ENCODE measurements at regions of chr20 and their contacts with region 1.

Region 1: DNA sequence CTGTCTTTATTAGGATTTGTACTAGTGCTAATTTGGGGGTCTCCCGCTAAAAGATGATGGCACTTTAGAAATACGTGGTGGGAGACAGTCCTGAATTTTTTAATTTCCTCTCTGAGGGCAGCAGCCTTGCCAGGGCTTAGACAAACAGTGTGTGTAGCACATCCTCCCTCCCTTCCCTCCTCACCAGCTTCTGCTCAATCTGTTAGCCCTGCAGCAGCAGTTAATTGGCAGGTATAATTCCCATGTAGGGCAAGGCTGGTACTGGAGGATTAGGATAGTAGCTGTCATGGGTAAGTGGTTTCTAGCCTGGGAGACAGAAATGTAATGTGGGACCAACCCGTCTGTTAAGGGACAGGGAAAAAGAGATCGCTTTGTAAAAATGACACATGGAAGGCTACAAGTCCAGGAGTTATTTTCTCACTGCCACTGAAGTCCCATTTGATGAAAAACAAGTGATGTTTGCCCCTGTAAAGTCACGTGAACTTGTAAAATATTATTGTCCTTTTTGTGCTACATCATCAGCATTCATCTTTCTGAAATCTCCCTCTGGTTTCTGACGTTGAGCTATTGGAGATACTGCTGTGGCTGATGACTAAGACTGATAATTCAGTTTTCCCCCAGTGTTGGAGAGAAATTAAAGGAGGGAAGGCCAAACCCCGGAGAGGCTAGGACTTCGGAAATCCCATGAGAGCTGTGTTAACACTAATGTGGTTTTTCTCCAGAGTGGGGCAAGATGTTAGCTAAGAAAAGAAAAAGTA is 40.6 kb downstream of the CTNNBL1 start:
- DNase-seq: peak in 1 of 10 donors; percentile 24
- H3K4me3 ChIP-seq: no peak overlapping the region
- H3K27ac ChIP-seq: peak overlapping the region in 55 of 59 donors; percentile 1 to 87 (median 58)
- H3K27me3 ChIP-seq: no peaks in the 10 kb centered on the region
- CTCF ChIP-seq: no peak

Region 2: DNA sequence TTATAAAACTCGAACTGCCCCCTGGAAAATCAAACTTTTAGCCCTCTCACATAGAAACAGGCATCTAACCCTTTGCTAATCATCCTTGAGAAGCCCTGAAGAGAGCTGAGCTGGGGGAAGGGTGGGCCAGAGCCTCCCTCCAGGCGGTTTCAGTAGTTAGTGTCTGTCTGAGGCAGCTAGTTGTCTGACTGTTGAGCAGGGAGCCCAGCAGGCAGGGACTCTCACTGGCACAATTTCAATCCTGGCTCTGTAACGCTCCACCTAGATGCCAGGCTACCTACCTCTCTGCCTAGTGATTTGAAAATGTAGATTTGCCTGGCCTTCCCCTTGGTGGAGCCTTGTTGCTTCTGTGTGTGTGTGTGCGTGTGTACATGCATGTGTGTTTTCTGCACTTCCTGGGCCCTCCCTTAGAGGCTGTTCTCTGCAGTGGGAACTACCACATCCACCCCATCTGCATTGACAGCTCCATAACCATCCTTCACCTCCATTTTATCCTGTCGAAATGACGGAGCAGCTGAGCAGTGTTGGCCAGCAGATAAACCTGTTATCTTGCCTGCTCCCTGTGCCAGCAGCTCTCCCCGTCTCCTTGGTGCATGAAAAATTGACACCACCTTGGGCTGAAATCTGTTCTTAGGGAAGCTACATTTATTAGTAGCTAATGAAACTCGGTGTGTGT is 99.0 kb after region 1 on chr20:
- intact Hi-C with region 1: loop called in 1 of 2 experiments (anchors 1 kb)
- DNase-seq: peak in 1 of 10 donors; percentile 60
- H3K4me3 ChIP-seq: no peak overlapping the region
- H3K27ac ChIP-seq: peak overlapping the region in 2 of 59 donors; percentile 1 to 9
- H3K27me3 ChIP-seq: no peaks in the 10 kb centered on the region
- CTCF ChIP-seq: no peak